ENCODE measurements at regions of chr16 and their contacts with region 1.

Region 1: GRCh38 chr16:24036614-24037013 is 200.8 kb downstream of the PRKCB start:
- DNase-seq: no peak
- H3K4me3 ChIP-seq: no peak overlapping the region
- CTCF ChIP-seq: peak in 1 of 3 donors; percentile 29
- POLR2A ChIP-seq: no peak

Region 2: DNA sequence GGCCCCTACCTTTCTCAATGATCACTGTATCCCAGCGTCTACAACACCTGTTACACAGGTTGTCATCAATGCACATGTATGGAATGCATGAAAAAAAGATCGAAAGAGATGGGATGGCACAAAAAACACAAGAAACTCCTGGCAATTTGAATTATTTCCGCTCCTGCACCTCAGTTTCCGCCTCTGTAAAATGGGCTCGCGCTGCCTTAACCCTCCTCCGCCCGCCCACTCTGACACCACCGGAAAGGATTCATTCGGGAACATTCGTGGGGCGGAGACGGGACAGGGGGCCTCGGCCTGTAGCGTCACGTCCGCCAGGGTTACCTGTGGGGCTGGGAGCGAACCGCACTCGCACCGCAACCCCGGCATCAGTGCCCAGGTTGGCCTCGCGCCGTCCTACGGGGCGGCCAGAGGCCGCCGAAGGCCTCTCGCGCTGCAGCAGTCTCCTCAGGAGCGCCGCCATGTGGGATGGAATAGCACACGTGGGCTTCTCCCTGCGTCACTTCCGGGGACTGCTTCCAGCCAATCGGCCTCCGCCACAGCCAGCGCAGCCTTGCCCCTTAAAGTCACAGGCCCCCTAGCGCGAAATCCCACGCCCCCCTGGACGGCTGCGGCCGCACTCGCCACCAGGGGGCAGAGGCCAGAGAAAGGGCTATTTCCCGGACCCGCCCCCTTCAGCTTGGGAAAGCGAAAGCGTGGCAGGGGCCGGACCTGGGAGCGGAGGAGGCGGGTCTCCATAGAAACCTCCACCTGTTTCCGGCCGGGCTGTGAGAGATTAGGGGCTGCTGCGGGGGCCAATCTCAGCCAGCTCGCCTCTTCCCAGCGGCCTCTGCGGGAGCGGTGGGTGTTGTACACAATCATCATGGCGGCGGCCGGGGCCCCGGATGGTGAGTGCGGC is 479.5 kb before region 1 on chr16 and contains the starts of genes EARS2 and UBFD1:
- intact Hi-C with region 1: loop called (anchors 5 kb)
- DNase-seq: peak; percentile 96 to 100
- H3K4me3 ChIP-seq: peak within 1 kb of the TSS; percentile 89
- CTCF ChIP-seq: peak in 1 of 3 donors; percentile 94
- POLR2A ChIP-seq: no peak
- total RNA-seq, gene EARS2: 16.8 to 27.1 (median 20.7) TPM
- total RNA-seq, gene UBFD1: 32.5 to 61.3 (median 42.7) TPM

Region 3: DNA sequence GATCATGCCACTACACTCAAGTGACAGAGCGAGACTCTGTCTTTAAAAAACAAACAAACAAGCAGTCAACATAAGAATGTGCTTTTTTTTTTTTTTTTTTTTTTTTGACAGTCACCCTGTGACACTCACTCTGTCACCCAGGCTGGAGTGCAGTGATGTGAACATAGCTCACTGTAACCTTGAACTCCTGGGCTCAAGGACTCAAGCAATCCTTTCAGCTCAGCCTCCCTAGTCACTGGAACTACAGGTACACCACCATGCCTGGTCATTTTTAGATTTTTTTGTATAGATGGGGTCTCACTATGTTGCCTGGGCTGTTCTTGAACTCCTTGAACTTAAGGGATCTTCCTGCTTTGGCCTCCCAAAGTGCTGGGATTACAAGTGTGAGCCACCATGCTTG is 297.1 kb before region 1 on chr16:
- intact Hi-C with region 1: loop called (anchors 5 kb)
- DNase-seq: peak in 1 of 2 donors; percentile 40
- H3K4me3 ChIP-seq: no peak overlapping the region
- CTCF ChIP-seq: no peak
- POLR2A ChIP-seq: no peak

Measured in lower leg skin (tissue), 4 donors.